ENCODE measurements at regions of chr2 and their contacts with region 1.

Region 1: GRCh38 chr2:25131567-25132298 is 36.6 kb downstream of the POMC start:
- DNase-seq: peak in 2 of 5 donors; percentile 25 to 36
- ATAC-seq: peak; percentile 26 to 60 (median 40)
- H3K4me3 ChIP-seq: peak overlapping the region in 11 of 12 donors; percentile 16 to 48 (median 31)
- H3K27ac ChIP-seq: no peak overlapping the region
- H3K4me1 ChIP-seq: peaks cover 0 to 28% (median 8%) of the 10 kb centered on the region in 12 donors
- H3K27me3 ChIP-seq: peaks cover 0 to 26% (median 0%) of the 10 kb centered on the region in 9 donors
- CTCF ChIP-seq: no peak
- POLR2A ChIP-seq: no peak

Region 2: DNA sequence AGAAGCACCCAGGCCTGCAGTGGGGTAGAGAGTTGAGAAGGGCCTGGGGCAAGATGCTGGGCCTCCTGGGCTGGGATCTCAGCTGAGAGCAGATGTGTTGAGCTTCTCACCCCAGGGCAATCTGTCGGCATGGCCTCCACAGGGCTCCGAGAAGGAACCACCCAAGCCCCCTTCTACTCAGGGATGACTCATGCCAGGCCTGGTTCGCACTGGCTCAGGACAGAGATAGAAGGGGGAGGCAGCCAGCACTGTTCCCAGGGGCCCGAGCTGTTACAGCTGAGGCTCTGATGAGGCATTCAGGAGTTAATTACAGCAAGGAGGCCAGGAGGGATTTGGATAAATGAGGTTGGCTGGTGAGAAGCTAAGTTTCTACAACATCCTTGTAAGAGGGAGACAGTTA is 276.0 kb before region 1 on chr2:
- intact Hi-C with region 1: no loop called
- DNase-seq: peak in 2 of 5 donors; percentile 50 to 75
- ATAC-seq: peak in 3 of 4 donors; percentile 43 to 82 (median 69)
- H3K4me3 ChIP-seq: no peak overlapping the region
- H3K27ac ChIP-seq: peak overlapping the region; percentile 48 to 89 (median 75)
- H3K4me1 ChIP-seq: peaks cover 0 to 46% (median 14%) of the 10 kb centered on the region in 12 donors
- H3K27me3 ChIP-seq: no peaks in the 10 kb centered on the region
- CTCF ChIP-seq: no peak
- POLR2A ChIP-seq: no peak

Region 3: DNA sequence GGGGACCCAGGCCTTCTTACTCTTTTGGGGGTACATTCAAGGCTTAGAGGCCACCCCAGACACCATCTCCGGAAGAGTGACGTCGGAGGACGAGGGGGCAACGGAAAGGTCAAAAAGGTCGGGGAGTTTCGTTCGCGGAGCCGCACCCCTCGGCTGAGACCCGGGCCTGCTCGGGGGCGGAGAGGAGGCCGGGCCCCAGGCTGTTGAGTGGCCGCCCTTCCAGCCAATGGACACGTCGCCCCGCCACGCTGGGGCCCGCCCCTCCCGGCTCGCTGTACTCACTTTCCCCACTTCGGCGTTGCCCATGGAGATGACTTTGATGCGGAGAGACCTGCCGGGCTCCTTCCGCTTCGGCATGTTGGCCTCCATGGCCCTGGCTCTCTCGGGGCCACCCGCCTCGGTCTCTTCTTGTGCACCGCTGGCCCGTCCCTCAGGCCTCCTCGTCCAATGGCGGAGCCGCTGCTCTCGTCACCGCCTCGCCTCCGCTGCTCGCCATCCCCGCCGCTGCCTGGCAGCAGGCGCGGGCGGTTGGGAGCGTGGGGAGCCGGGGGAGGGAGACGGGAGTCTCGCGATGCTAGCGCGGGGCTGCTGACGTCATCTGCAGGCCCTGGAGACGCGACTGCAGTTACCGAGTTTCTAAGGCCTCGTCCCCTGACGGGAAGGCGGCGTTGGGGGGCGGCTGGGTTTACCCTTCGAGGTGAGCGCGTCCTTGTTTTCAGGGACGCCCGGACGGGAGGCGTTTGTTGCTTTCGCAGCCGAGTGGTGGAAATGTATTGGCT is 160.0 kb before region 1 on chr2 and contains the start of gene DNAJC27:
- intact Hi-C with region 1: loop called in 9 of 10 experiments (anchors 1 to 2 kb)
- DNase-seq: peak; percentile 98 to 99 (median 99)
- ATAC-seq: peak; percentile 95 to 97 (median 96)
- H3K4me3 ChIP-seq: peak within 1 kb of the TSS; percentile 70 to 94 (median 82)
- H3K27ac ChIP-seq: peak within 1 kb of the TSS; percentile 95 to 99 (median 98)
- H3K4me1 ChIP-seq: peaks cover 0 to 23% (median 13%) of the 10 kb centered on the region in 12 donors
- H3K27me3 ChIP-seq: no peaks in the 10 kb centered on the region
- CTCF ChIP-seq: no peak
- POLR2A ChIP-seq: peak; percentile 53 to 95
- total RNA-seq, gene DNAJC27: 5.1 to 13.6 (median 9.1) TPM

Region 4: GRCh38 chr2:25032094-25032493 is 99.6 kb before region 1 on chr2:
- intact Hi-C with region 1: loop called in 1 of 10 experiments (anchors 10 kb)
- DNase-seq: no peak
- ATAC-seq: no peak
- H3K4me3 ChIP-seq: no peak overlapping the region
- H3K27ac ChIP-seq: no peak overlapping the region
- H3K4me1 ChIP-seq: peaks cover 0 to 3% (median 0%) of the 10 kb centered on the region in 12 donors
- H3K27me3 ChIP-seq: no peaks in the 10 kb centered on the region
- CTCF ChIP-seq: no peak
- POLR2A ChIP-seq: no peak

Region 5: GRCh38 chr2:25078171-25079049 is 53.3 kb before region 1 on chr2:
- intact Hi-C with region 1: loop called in 1 of 10 experiments (anchors 5 kb)
- DNase-seq: peak in 2 of 5 donors; percentile 26 to 41
- ATAC-seq: peak; percentile 43 to 89 (median 68)
- H3K4me3 ChIP-seq: peak overlapping the region in 5 of 12 donors; percentile 5 to 24 (median 13)
- H3K27ac ChIP-seq: peak overlapping the region in 11 of 12 donors; percentile 23 to 73 (median 65)
- H3K4me1 ChIP-seq: peaks cover 3 to 57% (median 33%) of the 10 kb centered on the region in 12 donors
- H3K27me3 ChIP-seq: no peaks in the 10 kb centered on the region
- CTCF ChIP-seq: no peak
- POLR2A ChIP-seq: no peak

Region 6: DNA sequence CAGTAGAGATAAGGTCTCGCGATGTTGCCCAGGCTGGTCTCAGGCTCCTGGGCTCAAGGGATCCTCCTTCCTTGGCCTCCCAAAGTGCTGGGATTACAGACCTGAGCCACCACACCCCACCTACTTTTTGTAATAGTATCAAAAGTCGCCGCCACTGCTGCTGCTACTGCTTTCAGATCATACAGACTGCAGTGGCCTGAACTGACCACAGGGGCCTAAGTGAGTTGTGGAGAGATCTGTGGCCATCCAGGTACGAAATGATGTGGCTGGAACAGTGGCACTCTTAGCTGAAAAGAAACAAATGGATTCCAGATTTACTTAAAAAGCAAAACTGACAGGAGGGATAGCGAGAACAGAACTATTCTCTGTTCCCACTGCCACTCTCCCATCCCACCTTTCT is 69.5 kb after region 1 on chr2:
- intact Hi-C with region 1: loop called in 2 of 10 experiments (anchors 5 kb)
- DNase-seq: no peak
- ATAC-seq: no peak
- H3K4me3 ChIP-seq: no peak overlapping the region
- H3K27ac ChIP-seq: no peak overlapping the region
- H3K4me1 ChIP-seq: peaks cover 0 to 10% (median 0%) of the 10 kb centered on the region in 12 donors
- H3K27me3 ChIP-seq: no peaks in the 10 kb centered on the region
- CTCF ChIP-seq: peak in 3 of 12 donors; percentile 9 to 23 (median 12)
- POLR2A ChIP-seq: no peak

Region 7: DNA sequence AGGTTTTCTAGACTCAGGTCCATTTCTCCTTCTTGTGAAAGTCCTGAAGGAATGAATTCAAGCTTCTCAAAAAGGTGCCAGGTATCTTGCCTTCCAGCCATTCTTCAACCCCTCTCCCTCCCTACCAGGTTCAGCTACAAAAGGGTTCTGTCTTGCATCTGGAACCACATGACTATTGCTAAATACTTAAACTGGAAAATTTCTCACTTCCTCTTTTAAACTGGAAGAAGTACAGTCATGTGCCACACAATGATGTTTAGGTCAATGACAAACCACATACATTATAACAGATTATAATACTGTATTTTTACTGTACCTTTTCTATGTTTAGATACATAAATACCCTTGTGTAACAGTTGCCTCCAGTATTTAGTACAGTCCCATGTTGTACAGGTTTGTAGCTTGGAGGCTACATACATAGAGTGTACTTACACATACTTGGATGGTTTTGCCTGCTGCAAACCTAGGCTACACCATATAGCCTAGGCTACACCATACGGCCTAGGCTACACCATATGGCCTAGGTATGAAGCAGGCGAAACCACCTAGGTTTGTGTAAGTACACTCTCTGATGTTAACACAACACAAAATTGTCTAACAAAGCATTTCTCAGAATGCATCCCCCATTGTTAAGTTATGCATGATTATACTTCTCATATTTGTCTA is 352.0 kb after region 1 on chr2:
- intact Hi-C with region 1: no loop called
- DNase-seq: no peak
- ATAC-seq: peak in 1 of 4 donors; percentile 57
- H3K4me3 ChIP-seq: no peak overlapping the region
- H3K27ac ChIP-seq: peak overlapping the region in 1 of 12 donors; percentile 15
- H3K4me1 ChIP-seq: peaks cover 0 to 14% (median 0%) of the 10 kb centered on the region in 12 donors
- H3K27me3 ChIP-seq: no peaks in the 10 kb centered on the region
- CTCF ChIP-seq: no peak
- POLR2A ChIP-seq: no peak